Psoas muscle (tissue), 8 donors: ENCODE measurements at regions of chr13 and their contacts with region 1.

Region 1: GRCh38 chr13:23466144-23467002 is 32.9 kb upstream of the SACS start:
- DNase-seq: peak; percentile 71 to 84
- ATAC-seq: peak; percentile 92 to 94 (median 92)
- H3K4me3 ChIP-seq: peak overlapping the region; percentile 68
- H3K27ac ChIP-seq: peak overlapping the region; percentile 87
- H3K4me1 ChIP-seq: peaks cover 24% of the 10 kb centered on the region
- H3K27me3 ChIP-seq: no peaks in the 10 kb centered on the region
- CTCF ChIP-seq: peak; percentile 60

Region 2: GRCh38 chr13:21501686-21502085 is 1964.7 kb before region 1 on chr13:
- intact Hi-C with region 1: no loop called
- DNase-seq: no peak
- ATAC-seq: no peak
- H3K4me3 ChIP-seq: no peak overlapping the region
- H3K27ac ChIP-seq: no peak overlapping the region
- H3K4me1 ChIP-seq: no peaks in the 10 kb centered on the region
- H3K27me3 ChIP-seq: no peaks in the 10 kb centered on the region
- CTCF ChIP-seq: no peak

Region 3: GRCh38 chr13:23087880-23088279 is 378.5 kb before region 1 on chr13:
- intact Hi-C with region 1: no loop called
- DNase-seq: no peak
- ATAC-seq: no peak
- H3K4me3 ChIP-seq: no peak overlapping the region
- H3K27ac ChIP-seq: no peak overlapping the region
- H3K4me1 ChIP-seq: no peaks in the 10 kb centered on the region
- H3K27me3 ChIP-seq: no peaks in the 10 kb centered on the region
- CTCF ChIP-seq: no peak

Region 4: DNA sequence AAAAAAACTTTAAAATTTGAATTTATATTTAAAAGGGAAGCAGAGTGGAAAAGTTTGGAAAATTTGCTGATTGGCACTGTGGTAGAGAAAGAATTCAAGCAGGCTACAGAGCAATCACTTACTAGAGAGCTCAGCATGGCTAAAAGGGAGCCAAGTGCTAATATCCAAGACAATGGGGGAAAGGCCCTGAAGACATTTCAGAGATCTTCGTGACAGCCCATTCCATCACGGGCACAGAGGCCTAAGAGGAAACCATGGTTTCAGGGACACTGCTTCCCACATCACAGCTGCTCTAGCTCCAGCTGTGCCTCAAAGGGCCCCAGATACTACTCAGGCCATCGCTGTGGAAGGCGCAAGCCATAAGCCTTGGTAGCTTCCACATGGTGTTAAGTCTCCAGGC is 211.9 kb before region 1 on chr13:
- intact Hi-C with region 1: no loop called
- DNase-seq: no peak
- ATAC-seq: no peak
- H3K4me3 ChIP-seq: no peak overlapping the region
- H3K27ac ChIP-seq: no peak overlapping the region
- H3K4me1 ChIP-seq: no peaks in the 10 kb centered on the region
- H3K27me3 ChIP-seq: no peaks in the 10 kb centered on the region
- CTCF ChIP-seq: no peak

Region 5: GRCh38 chr13:23570099-23570920 is 103.9 kb after region 1 on chr13 and contains the start of gene TNFRSF19:
- intact Hi-C with region 1: loop called (anchors 5 kb)
- DNase-seq: peak in 1 of 2 donors; percentile 29
- ATAC-seq: peak; percentile 49 to 78 (median 72)
- H3K4me3 ChIP-seq: peak within 1 kb of the TSS; percentile 36
- H3K27ac ChIP-seq: peak within 1 kb of the TSS; percentile 39
- H3K4me1 ChIP-seq: peaks cover 8% of the 10 kb centered on the region
- H3K27me3 ChIP-seq: no peaks in the 10 kb centered on the region
- CTCF ChIP-seq: no peak
- total RNA-seq, gene TNFRSF19: 0.38 to 2.0 (median 1.1) TPM

Region 6: DNA sequence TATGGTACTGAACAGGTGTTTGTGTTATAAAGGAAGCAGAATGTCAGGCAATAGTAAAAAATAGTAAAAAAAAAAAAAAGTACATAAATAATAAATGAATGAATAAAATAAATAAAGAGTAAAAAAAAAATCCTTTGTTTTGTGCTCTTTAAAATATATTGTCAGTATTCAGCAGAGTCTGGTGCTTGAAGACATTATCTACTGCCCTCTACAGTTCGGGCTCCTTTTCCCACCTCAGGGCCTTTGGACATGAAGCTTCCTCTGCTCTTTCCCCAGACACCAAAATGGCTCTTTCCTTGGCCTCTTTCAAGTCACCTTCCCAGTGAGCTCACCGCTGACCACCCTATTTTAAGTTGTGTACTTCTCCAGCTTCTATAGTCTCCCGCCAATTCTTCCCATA is 241.3 kb after region 1 on chr13:
- intact Hi-C with region 1: loop called in 1 of 2 experiments (anchors 10 kb)
- DNase-seq: no peak
- ATAC-seq: no peak
- H3K4me3 ChIP-seq: no peak overlapping the region
- H3K27ac ChIP-seq: no peak overlapping the region
- H3K4me1 ChIP-seq: peaks cover 6% of the 10 kb centered on the region
- H3K27me3 ChIP-seq: no peaks in the 10 kb centered on the region
- CTCF ChIP-seq: peak; percentile 5

Region 7: GRCh38 chr13:23871616-23872220 is 405.3 kb after region 1 on chr13:
- intact Hi-C with region 1: loop called (anchors 2 to 5 kb)
- DNase-seq: no peak
- ATAC-seq: peak in 3 of 4 donors; percentile 50 to 79 (median 54)
- H3K4me3 ChIP-seq: no peak overlapping the region
- H3K27ac ChIP-seq: no peak overlapping the region
- H3K4me1 ChIP-seq: peaks cover 7% of the 10 kb centered on the region
- H3K27me3 ChIP-seq: no peaks in the 10 kb centered on the region
- CTCF ChIP-seq: peak; percentile 72